BJ (cell line): ENCODE measurements at regions of chr7 and their contacts with region 1.

Region 1: DNA sequence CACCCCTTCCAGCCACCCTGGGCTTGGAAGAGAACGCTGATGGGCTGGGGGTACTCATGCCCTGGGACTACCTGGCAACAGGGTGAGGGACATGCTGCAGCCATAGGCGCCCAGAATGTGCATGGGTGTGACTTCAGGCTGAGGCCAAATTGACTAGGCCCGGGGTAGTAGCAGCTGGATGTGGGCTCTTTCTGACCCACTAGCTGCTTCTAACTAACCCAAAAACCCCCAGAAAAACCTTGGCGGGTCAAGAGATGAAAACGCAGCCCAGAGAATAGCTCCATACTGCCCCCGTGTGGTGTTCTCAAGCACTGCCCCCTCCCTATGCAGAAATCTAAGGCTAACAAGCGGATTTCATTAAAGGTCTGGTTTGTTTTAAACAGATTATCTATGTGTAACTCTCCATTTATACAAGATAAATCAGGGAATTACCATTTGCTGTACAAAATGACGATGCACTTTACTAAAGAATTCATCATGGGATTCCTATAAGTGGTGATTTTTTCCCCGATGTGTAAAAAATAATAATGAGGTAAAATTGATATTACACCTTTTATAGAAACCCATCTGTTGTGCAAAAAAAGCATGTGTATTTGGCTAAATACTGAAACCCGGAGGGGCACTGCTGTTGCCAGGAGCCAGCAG is 4.2 kb downstream of the SMARCD3 start:
- DNase-seq: no peak
- H3K4me3 ChIP-seq: no peak overlapping the region
- H3K27me3 ChIP-seq: no peaks in the 10 kb centered on the region
- CTCF ChIP-seq: peak; percentile 94

Region 2: GRCh38 chr7:151226875-151227782 is 17.2 kb before region 1 on chr7 and contains the start of gene ABCF2:
- CTCF ChIA-PET with region 1: interaction called, 15 read pairs
- POLR2A ChIA-PET with region 1: no interaction called
- DNase-seq: peak; percentile 95
- H3K4me3 ChIP-seq: peak within 1 kb of the TSS; percentile 96
- H3K27me3 ChIP-seq: no peaks in the 10 kb centered on the region
- CTCF ChIP-seq: 0 out of 2 replicates have a peak, but pooled peaks have one; percentile 11
- polyA plus RNA-seq, gene ABCF2: 44.2 and 62.5 TPM in 2 replicates

Region 3: GRCh38 chr7:151232091-151232916 is 12.0 kb before region 1 on chr7 and contains the start of gene CHPF2:
- CTCF ChIA-PET with region 1: interaction called, 15 read pairs
- POLR2A ChIA-PET with region 1: no interaction called
- DNase-seq: peak; percentile 35
- H3K4me3 ChIP-seq: peak within 1 kb of the TSS; percentile 97
- H3K27me3 ChIP-seq: no peaks in the 10 kb centered on the region
- CTCF ChIP-seq: no peak
- polyA plus RNA-seq, gene CHPF2: 26.1 and 42.6 TPM in 2 replicates

Region 4: DNA sequence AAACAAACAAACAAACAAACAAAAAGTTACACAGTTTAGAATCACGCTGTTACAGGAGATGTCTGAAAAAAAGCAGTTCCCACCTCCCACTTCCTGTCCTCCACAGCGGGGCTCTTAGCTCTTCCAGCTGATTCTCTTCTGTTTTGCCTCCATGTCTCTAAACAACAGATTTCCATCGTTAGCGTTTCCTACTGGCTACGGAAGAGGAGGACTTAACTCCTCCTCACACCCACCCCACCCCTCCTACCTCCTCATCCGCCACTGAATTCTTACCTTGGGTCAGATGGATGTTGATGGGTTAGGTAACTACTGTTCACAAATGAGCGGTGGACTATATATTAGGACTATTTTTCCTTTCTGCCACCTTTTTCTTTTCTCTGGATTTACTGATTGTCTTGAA is 60.5 kb after region 1 on chr7:
- CTCF ChIA-PET with region 1: interaction called, 14 read pairs
- POLR2A ChIA-PET with region 1: interaction called, 5 read pairs
- DNase-seq: no peak
- H3K4me3 ChIP-seq: peak overlapping the region; percentile 7; the same call in 1 of the 2 replicates
- H3K27me3 ChIP-seq: peaks cover 6% of the 10 kb centered on the region
- CTCF ChIP-seq: no peak